Left cardiac atrium (tissue), 4 donors: ENCODE measurements at regions of chr15 and their contacts with region 1.

Region 1: DNA sequence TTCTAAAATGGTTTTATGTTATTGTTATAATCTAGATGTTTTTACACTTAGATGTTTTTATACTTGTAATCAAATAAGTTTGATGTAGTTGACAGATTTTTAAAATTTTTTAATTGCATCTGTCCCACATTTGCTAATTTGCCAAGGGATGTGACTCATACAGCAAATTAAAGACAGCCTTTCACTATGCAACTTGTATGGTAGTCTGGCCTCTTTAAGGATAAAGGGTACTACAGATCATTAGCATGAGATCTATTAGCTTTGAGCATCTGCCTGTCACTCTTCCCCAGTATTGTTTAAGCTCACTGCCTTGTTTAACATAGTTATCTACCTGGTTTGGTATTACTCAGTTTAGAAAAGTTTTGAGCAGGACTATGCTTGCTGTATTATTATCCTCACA is 83.0 kb downstream of the NPTN start:
- DNase-seq: no peak
- ATAC-seq: no peak

Region 2: DNA sequence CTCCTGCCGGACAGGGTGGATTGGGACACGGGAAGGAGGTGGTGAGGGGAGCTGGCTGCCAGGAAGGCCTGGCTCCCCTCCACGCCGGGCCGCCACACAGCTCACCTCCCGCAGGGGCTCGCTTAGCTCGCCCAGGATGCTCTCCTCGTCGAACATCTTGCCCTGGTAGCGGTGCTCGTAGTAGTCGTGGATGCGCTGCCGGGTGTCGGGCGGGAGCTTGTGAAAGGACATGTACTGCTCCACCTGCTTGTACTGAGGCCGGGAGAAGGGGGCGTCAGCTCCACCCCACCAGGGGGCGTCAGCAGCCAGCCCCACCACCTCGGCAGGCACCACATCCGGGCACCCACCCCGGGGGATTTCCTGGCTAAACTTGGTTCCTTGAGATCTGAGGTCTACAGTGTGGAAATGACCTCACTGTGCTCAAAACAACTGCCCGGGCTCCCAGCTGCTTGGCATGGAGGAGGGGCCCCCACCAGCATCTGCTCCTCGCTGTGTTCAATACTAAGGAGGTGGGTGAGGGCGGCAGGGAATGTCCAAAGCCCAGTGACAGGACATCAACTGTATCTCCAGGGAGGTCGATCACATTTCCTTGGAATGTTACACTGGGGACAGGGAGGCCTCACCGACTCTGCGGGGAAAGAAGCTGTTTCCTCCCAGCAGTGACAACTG is 224.9 kb before region 1 on chr15:
- intact Hi-C with region 1: loop called in 1 of 2 experiments (anchors 10 kb)
- DNase-seq: no peak
- ATAC-seq: no peak